Activated B cell treated with CpG ODN at 0.5 μM for 24 hours (primary cell): ENCODE measurements at regions of chrX and their contacts with region 1.

Region 1: GRCh38 chrX:65451663-65452062 is 82.9 kb downstream of the LAS1L start:
- DNase-seq: no peak
- ATAC-seq: no peak
- H3K4me3 Mint-ChIP-seq: no peak overlapping the region
- H3K27ac Mint-ChIP-seq: no peak overlapping the region
- H3K4me1 Mint-ChIP-seq: peaks cover 3% of the 10 kb centered on the region
- H3K27me3 Mint-ChIP-seq: no peaks in the 10 kb centered on the region
- CTCF ChIP-seq: no peak

Region 2: GRCh38 chrX:64093761-64094160 is 1357.9 kb before region 1 on chrX:
- CTCF ChIA-PET with region 1: interaction called, 5 read pairs
- POLR2A ChIA-PET with region 1: no interaction called
- intact Hi-C with region 1: loop called (anchors 5 kb)
- DNase-seq: no peak
- ATAC-seq: no peak
- H3K4me3 Mint-ChIP-seq: no peak overlapping the region
- H3K27ac Mint-ChIP-seq: no peak overlapping the region
- H3K4me1 Mint-ChIP-seq: no peaks in the 10 kb centered on the region
- H3K27me3 Mint-ChIP-seq: no peaks in the 10 kb centered on the region
- CTCF ChIP-seq: no peak

Region 3: DNA sequence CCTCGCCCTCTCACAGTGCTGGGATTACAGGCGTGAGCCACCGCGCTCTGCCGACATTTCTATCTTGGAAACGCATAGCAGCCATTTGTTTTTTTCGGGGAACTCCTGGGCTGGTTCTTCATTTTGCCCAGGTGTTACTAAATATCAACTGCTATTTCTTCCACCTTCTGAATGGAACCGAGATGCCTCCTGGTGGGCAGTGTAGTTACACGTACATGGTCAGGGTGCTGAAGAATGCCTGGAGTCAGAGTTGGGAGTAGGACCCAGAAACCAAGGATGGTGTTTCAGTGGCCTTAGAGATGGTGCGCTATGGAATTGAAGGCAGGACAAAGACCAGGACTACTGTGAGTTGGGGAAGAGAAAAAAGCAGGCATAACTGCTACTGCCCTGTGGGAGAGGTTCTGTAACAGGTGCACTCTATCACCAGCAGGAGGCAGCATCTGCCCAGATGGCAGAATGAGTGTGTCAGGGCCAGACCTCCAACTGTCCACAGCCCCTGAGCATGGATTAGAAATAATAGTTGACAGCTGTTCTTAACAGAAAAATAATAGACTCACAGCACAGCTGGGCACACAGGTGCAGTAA is 557.1 kb before region 1 on chrX:
- CTCF ChIA-PET with region 1: no interaction called
- POLR2A ChIA-PET with region 1: no interaction called
- intact Hi-C with region 1: loop called (anchors 10 kb)
- DNase-seq: no peak
- ATAC-seq: no peak
- H3K4me3 Mint-ChIP-seq: no peak overlapping the region
- H3K27ac Mint-ChIP-seq: no peak overlapping the region
- H3K4me1 Mint-ChIP-seq: peaks cover 3% of the 10 kb centered on the region
- H3K27me3 Mint-ChIP-seq: no peaks in the 10 kb centered on the region
- CTCF ChIP-seq: no peak

Region 4: DNA sequence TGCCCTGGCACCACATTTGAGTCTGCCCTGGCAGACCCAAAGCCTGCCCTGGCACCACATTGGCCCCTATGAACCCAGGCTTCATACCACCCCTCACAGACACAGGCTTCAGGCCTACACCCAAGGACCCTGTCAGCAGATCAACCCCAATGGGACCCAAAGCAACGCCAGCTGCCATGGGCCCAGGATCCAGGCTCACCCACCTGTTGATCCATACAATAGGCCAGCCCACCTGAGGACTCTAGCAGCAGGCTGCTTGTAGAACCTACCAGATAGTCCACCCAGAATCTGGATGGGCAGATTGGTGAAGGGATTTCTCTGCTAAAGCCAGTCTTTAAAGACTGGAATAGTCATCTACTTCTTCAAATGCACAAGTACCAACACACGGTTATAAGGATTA is 31.5 kb before region 1 on chrX:
- CTCF ChIA-PET with region 1: no interaction called
- POLR2A ChIA-PET with region 1: no interaction called
- intact Hi-C with region 1: no loop called
- DNase-seq: no peak
- ATAC-seq: no peak
- H3K4me3 Mint-ChIP-seq: no peak overlapping the region
- H3K27ac Mint-ChIP-seq: no peak overlapping the region
- H3K4me1 Mint-ChIP-seq: no peaks in the 10 kb centered on the region
- H3K27me3 Mint-ChIP-seq: no peaks in the 10 kb centered on the region
- CTCF ChIP-seq: no peak